ENCODE measurements at regions of chr3 and their contacts with region 1.

Region 1: GRCh38 chr3:119463171-119464169 is at the start of gene TMEM39A:
- DNase-seq: peak; percentile 99
- H3K4me3 Mint-ChIP-seq: peak within 1 kb of the TSS; percentile 97
- H3K27ac Mint-ChIP-seq: peak within 1 kb of the TSS; percentile 96
- H3K4me1 Mint-ChIP-seq: peaks cover 54% of the 10 kb centered on the region
- H3K27me3 Mint-ChIP-seq: no peaks in the 10 kb centered on the region
- total RNA-seq, gene TMEM39A: 42.7 to 42.8 TPM

Region 2: GRCh38 chr3:119293871-119294695 is 169.4 kb before region 1 on chr3 and contains the start of gene ARHGAP31:
- CTCF ChIA-PET with region 1: no interaction called
- POLR2A ChIA-PET with region 1: interaction called, 42 read pairs
- DNase-seq: peak; percentile 84
- H3K4me3 Mint-ChIP-seq: peak within 1 kb of the TSS; percentile 80
- H3K27ac Mint-ChIP-seq: peak within 1 kb of the TSS; percentile 76
- H3K4me1 Mint-ChIP-seq: peaks cover 47% of the 10 kb centered on the region
- H3K27me3 Mint-ChIP-seq: peaks cover 28% of the 10 kb centered on the region
- total RNA-seq, gene ARHGAP31: 3.7 to 4.5 TPM

Region 3: GRCh38 chr3:119343719-119344118 is 119.8 kb before region 1 on chr3:
- CTCF ChIA-PET with region 1: no interaction called
- POLR2A ChIA-PET with region 1: no interaction called
- DNase-seq: no peak
- H3K4me3 Mint-ChIP-seq: no peak overlapping the region
- H3K27ac Mint-ChIP-seq: no peak overlapping the region
- H3K4me1 Mint-ChIP-seq: no peaks in the 10 kb centered on the region
- H3K27me3 Mint-ChIP-seq: no peaks in the 10 kb centered on the region

Region 4: GRCh38 chr3:119443179-119443578 is 20.3 kb before region 1 on chr3:
- CTCF ChIA-PET with region 1: interaction called, 3 read pairs
- POLR2A ChIA-PET with region 1: interaction called, 16 read pairs
- DNase-seq: no peak
- H3K4me3 Mint-ChIP-seq: no peak overlapping the region
- H3K27ac Mint-ChIP-seq: no peak overlapping the region
- H3K4me1 Mint-ChIP-seq: peaks cover 11% of the 10 kb centered on the region
- H3K27me3 Mint-ChIP-seq: no peaks in the 10 kb centered on the region

Region 5: GRCh38 chr3:119498186-119498987 is 34.9 kb after region 1 on chr3 and contains the start of gene TIMMDC1:
- CTCF ChIA-PET with region 1: interaction called, 12 read pairs
- POLR2A ChIA-PET with region 1: interaction called, 235 read pairs
- DNase-seq: peak; percentile 98
- H3K4me3 Mint-ChIP-seq: peak within 1 kb of the TSS; percentile 99
- H3K27ac Mint-ChIP-seq: peak within 1 kb of the TSS; percentile 96
- H3K4me1 Mint-ChIP-seq: peaks cover 45% of the 10 kb centered on the region
- H3K27me3 Mint-ChIP-seq: no peaks in the 10 kb centered on the region
- total RNA-seq, gene TIMMDC1: 66.4 to 67.4 TPM

Region 6: DNA sequence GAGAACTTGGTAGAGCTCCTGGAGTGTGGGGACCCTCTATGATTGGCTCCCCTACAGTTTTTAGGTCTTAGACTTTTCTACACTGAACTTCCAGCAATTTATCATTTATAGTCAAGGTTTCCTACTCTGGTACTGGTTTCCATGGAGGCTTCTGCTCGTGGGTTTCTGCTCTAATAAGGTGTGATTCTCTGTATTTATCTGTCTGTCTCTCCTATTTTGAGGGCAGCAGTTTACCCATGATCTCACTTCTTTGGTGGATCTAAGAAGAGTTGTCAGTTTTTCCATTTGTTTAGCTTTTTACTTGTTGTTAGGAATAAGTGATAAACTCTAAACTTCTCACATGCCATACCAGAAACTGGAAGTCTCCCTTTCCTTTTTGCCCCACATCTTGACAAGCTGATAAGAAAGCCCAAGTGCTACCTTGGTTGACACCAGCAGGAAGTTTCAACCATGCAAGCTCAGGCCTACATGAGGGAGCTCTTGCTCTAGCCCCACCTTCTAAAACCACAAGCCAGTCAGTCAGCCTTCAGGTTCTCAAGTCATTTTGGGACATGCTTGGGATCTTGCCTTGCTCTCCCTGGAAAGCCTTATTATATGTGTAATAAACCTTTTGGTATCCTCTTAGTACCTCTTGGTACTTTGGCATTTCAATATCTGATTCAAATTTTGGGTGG is 44.8 kb after region 1 on chr3:
- CTCF ChIA-PET with region 1: interaction called, 5 read pairs
- POLR2A ChIA-PET with region 1: interaction called, 19 read pairs
- DNase-seq: peak; percentile 50
- H3K4me3 Mint-ChIP-seq: peak overlapping the region; percentile 23
- H3K27ac Mint-ChIP-seq: peak overlapping the region; percentile 87
- H3K4me1 Mint-ChIP-seq: peaks cover 40% of the 10 kb centered on the region
- H3K27me3 Mint-ChIP-seq: no peaks in the 10 kb centered on the region

Region 7: DNA sequence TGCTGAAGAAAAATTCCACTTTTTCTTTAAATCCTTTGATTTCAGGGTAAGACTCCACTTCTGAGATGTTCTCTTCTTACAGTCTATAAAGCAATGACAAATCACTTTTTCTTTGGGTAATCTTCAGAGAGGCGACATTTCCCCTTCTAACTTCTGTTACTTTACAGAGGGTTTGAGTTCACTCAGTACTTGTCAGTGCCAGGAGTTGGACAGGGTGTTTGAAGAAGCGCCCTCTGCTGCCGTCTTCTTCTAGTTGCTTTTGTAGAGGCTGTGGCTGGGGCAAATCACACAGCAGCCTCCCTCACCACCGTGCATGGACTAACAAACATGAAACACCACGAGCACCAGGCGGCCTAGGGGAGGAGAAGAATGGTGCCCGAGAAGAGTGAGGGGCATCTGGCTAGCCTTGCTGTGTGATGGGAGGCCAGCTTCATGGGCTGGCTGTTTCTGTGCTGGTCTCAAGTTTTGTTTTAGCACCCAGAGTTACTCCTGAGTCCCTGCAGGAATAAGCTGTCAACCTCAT is 96.0 kb after region 1 on chr3 and contains the start of gene CD80:
- CTCF ChIA-PET with region 1: interaction called, 10 read pairs
- POLR2A ChIA-PET with region 1: interaction called, 27 read pairs
- DNase-seq: peak; percentile 87
- H3K4me3 Mint-ChIP-seq: peak within 1 kb of the TSS; percentile 70
- H3K27ac Mint-ChIP-seq: peak within 1 kb of the TSS; percentile 80
- H3K4me1 Mint-ChIP-seq: peaks cover 70% of the 10 kb centered on the region
- H3K27me3 Mint-ChIP-seq: no peaks in the 10 kb centered on the region
- total RNA-seq, gene CD80: 27.1 to 29.5 TPM

Region 8: GRCh38 chr3:119604878-119605277 is 141.4 kb after region 1 on chr3:
- CTCF ChIA-PET with region 1: no interaction called
- POLR2A ChIA-PET with region 1: no interaction called
- DNase-seq: no peak
- H3K4me3 Mint-ChIP-seq: no peak overlapping the region
- H3K27ac Mint-ChIP-seq: no peak overlapping the region
- H3K4me1 Mint-ChIP-seq: peaks cover 25% of the 10 kb centered on the region
- H3K27me3 Mint-ChIP-seq: peaks cover 17% of the 10 kb centered on the region

Region 9: GRCh38 chr3:120095226-120095978 is 631.9 kb after region 1 on chr3:
- CTCF ChIA-PET with region 1: no interaction called
- POLR2A ChIA-PET with region 1: interaction called, 21 read pairs
- DNase-seq: peak; percentile 93
- H3K4me3 Mint-ChIP-seq: no peak overlapping the region
- H3K27ac Mint-ChIP-seq: no peak overlapping the region
- H3K4me1 Mint-ChIP-seq: peaks cover 24% of the 10 kb centered on the region
- H3K27me3 Mint-ChIP-seq: no peaks in the 10 kb centered on the region